ENCODE measurements at regions of chr6 and their contacts with region 1.

Region 1: DNA sequence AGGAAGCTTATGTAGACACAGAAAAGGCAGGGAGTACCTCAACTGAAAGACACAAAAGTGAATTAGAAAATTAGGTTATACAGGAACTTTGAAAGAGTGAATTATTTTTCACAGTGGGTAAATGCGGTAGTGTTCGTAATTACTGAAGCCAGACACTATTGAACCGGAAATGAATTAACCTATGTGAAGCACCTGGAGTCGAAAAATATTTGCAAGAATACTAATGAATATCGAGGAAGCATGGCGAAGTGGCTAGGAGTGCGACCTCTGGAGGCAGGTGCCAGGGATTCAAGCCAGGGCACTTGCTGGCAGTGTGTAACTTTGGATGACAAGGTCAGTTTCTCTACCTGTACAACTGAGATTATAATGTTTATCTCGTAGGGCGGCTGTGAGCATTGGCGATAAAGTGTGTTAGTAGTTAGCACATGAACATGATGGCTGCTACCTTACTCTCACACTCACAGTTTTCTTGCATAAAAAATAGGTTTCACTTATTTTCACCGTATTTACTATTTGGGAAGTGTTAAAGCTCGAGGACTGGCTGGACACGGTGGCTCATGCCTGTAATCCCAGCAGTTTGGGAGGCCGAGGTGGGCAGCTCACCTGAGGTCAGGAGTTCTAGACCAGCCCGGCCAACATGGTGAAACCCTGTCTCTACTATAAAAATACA is 567 bp upstream of the SLC18B1 start:
- DNase-seq: peak in 1 of 2 experiments; percentile 76
- ATAC-seq: peak in 1 of 2 experiments; percentile 91; a peak in 4 of 6 replicates
- H3K4me3 ChIP-seq: peak overlapping the region; percentile 73
- H3K27ac ChIP-seq: peak overlapping the region in 1 of 2 experiments; percentile 80; a peak in 4 of 6 replicates
- H3K4me1 ChIP-seq: no peaks in the 10 kb centered on the region
- CTCF ChIP-seq: peak; percentile 70
- EP300 ChIP-seq: no peak
- POLR2A ChIP-seq: no peak
- RAD21 ChIP-seq: peak; percentile 39 to 49

Region 2: DNA sequence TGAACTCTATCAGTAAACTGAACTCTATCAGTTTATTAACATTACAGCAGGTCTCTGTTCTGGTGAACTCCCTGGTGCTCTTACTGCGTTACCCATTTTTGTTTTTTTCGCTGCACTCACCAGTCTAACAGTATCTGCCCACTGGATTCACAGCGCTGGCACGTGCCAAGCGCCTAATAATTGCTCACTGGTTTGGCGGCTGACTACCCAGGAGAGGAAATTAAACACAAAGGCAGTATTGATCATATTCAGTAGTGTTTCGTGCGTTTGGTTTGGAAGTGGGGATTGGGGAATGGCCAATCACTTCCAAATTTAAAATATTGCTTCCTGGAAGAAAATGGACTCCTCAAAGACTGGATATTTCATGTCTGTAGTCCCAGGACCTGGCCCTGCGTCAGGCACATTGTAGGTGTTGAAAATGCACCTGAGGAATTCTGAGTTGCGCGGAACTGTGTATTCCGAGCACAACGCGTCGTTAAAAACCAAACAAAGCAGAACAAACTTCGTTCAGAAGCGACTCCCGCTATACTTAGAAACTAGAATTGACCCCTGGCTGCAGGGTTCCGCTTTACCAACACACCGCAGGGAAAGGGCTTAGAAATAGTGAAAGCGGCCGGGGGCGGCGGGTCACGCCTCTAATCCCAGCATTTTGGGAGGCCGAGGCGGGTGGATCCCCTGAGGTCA is 14.3 kb after region 1 on chr6:
- CTCF ChIA-PET with region 1: interaction called, 29 read pairs
- POLR2A ChIA-PET with region 1: interaction called, 13 read pairs
- DNase-seq: peak in 1 of 2 experiments; percentile 33
- ATAC-seq: peak in 1 of 2 experiments; percentile 22; a peak in 3 of 6 replicates
- H3K4me3 ChIP-seq: peak overlapping the region; percentile 89
- H3K27ac ChIP-seq: peak overlapping the region; percentile 96 to 98
- H3K4me1 ChIP-seq: peaks cover 25% of the 10 kb centered on the region
- CTCF ChIP-seq: no peak
- EP300 ChIP-seq: no peak
- POLR2A ChIP-seq: no peak
- RAD21 ChIP-seq: no peak

Measured in A549 (cell line).